Activated B cell treated with CpG ODN at 0.5 μM for 24 hours (primary cell): ENCODE measurements at regions of chr9 and their contacts with region 1.

Region 1: DNA sequence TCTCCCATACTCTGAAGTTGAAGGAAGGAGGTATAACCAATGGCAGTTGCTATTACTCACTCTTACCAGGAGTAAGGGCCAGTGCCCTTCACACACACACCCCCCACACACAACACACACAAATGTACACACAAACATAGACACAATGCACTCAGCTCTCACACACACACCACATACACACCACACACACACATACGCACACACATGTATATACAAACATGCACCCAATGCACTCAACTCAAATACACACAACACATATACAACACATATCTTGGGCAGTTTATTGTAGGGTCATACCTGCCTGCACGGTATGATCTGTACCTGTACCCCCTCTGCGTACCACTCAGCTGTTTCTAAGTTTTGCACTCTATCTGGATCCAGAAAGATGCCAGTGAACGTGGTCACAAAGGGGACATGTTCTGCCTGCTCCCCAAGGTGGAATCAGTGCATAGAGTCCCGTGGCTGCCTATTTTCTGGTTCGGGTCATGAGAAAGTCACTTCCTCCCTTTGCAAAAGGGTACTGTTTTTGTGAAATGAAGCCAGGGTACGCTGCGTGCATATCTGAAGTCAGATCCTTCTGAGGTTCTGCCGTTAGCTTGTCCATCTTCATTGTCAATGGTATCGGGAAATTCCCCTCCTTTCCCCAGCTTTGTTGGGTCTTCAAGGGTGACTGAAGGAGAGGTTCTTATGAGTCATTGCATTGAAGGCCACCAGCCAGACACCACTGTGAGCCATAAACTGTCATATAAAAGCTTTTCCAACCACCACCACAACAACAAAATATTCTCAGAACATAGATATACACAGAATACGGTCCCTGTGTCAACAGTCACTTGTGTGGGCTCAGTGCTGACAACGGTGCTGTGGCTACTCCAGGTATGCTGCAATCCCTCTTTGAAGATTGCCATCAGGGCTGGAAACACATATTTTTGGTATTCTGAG is 131.9 kb downstream of the UGCG start:
- DNase-seq: peak; percentile 41
- ATAC-seq: peak; percentile 79
- H3K4me3 Mint-ChIP-seq: peak overlapping the region; percentile 82
- H3K27ac Mint-ChIP-seq: peak overlapping the region; percentile 91
- H3K4me1 Mint-ChIP-seq: peaks cover 77% of the 10 kb centered on the region
- H3K27me3 Mint-ChIP-seq: no peaks in the 10 kb centered on the region
- CTCF ChIP-seq: no peak

Region 2: GRCh38 chr9:111828193-111828592 is 200.4 kb before region 1 on chr9:
- CTCF ChIA-PET with region 1: no interaction called
- POLR2A ChIA-PET with region 1: interaction called, 4 read pairs
- intact Hi-C with region 1: loop called (anchors 1 kb)
- DNase-seq: no peak
- ATAC-seq: no peak
- H3K4me3 Mint-ChIP-seq: no peak overlapping the region
- H3K27ac Mint-ChIP-seq: no peak overlapping the region
- H3K4me1 Mint-ChIP-seq: peaks cover 10% of the 10 kb centered on the region
- H3K27me3 Mint-ChIP-seq: no peaks in the 10 kb centered on the region
- CTCF ChIP-seq: no peak

Region 3: DNA sequence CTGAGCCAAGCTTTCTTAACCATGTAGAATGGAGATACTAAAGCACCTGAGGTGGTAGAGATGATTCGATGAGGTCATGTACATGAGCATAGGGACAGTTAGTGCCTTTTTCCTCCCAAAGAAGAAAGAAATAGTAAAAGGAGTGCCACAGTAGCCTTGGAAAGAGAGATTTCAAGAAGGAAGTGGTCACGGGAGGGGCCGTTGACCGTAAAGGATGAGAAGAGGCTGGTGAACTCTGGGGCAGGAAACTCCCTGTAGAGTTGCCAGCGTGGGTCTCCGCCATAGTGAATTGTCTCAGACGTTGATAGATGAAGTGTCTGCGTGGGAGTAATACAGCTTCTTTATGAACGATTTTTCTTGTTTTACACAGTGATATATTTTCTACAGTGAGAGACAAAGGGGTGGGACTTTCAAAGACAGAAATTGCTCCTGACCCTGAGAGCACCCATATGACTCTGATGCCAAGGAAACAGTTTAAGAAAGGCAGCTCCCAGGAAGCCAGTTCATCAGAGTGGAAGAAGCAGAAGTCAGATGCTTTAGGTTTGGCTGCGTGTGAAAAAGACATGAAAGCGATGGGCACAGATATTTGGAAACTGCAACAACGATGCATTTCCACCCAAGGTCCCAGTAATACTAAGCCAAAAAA is 90.6 kb before region 1 on chr9:
- CTCF ChIA-PET with region 1: no interaction called
- POLR2A ChIA-PET with region 1: interaction called, 11 read pairs
- intact Hi-C with region 1: no loop called
- DNase-seq: no peak
- ATAC-seq: peak; percentile 84
- H3K4me3 Mint-ChIP-seq: peak overlapping the region; percentile 69
- H3K27ac Mint-ChIP-seq: peak overlapping the region; percentile 86
- H3K4me1 Mint-ChIP-seq: peaks cover 43% of the 10 kb centered on the region
- H3K27me3 Mint-ChIP-seq: no peaks in the 10 kb centered on the region
- CTCF ChIP-seq: no peak

Region 4: GRCh38 chr9:112002131-112002846 is 26.3 kb before region 1 on chr9:
- CTCF ChIA-PET with region 1: no interaction called
- POLR2A ChIA-PET with region 1: interaction called, 55 read pairs
- intact Hi-C with region 1: no loop called
- DNase-seq: no peak
- ATAC-seq: no peak
- H3K4me3 Mint-ChIP-seq: peak overlapping the region; percentile 6
- H3K27ac Mint-ChIP-seq: peak overlapping the region; percentile 54
- H3K4me1 Mint-ChIP-seq: peaks cover 49% of the 10 kb centered on the region
- H3K27me3 Mint-ChIP-seq: no peaks in the 10 kb centered on the region
- CTCF ChIP-seq: no peak

Region 5: GRCh38 chr9:112061152-112061740 is 32.7 kb after region 1 on chr9:
- CTCF ChIA-PET with region 1: interaction called, 4 read pairs
- POLR2A ChIA-PET with region 1: interaction called, 47 read pairs
- intact Hi-C with region 1: loop called (anchors 1 kb)
- DNase-seq: no peak
- ATAC-seq: peak; percentile 70
- H3K4me3 Mint-ChIP-seq: no peak overlapping the region
- H3K27ac Mint-ChIP-seq: peak overlapping the region; percentile 85
- H3K4me1 Mint-ChIP-seq: peaks cover 67% of the 10 kb centered on the region
- H3K27me3 Mint-ChIP-seq: no peaks in the 10 kb centered on the region
- CTCF ChIP-seq: no peak

Region 6: GRCh38 chr9:112421771-112422222 is 393.2 kb after region 1 on chr9:
- CTCF ChIA-PET with region 1: no interaction called
- POLR2A ChIA-PET with region 1: no interaction called
- intact Hi-C with region 1: no loop called
- DNase-seq: no peak
- ATAC-seq: no peak
- H3K4me3 Mint-ChIP-seq: no peak overlapping the region
- H3K27ac Mint-ChIP-seq: no peak overlapping the region
- H3K4me1 Mint-ChIP-seq: no peaks in the 10 kb centered on the region
- H3K27me3 Mint-ChIP-seq: no peaks in the 10 kb centered on the region
- CTCF ChIP-seq: no peak